Activated T-helper 1 cell treated with anti-CD3 and anti-CD28 coated beads, Interleukin-12 subunit alpha, Interleukin-12 subunit beta, Interleukin-2, Interleukin-4 antibody, amounts not matched to agents 30 ng/mL and 10 ng/mL and 1 ng/mL, durations not matched to agents 14 hours and 24 hours and 36 hours (primary cell): ENCODE measurements at regions of chr6 and their contacts with region 1.

Region 1: DNA sequence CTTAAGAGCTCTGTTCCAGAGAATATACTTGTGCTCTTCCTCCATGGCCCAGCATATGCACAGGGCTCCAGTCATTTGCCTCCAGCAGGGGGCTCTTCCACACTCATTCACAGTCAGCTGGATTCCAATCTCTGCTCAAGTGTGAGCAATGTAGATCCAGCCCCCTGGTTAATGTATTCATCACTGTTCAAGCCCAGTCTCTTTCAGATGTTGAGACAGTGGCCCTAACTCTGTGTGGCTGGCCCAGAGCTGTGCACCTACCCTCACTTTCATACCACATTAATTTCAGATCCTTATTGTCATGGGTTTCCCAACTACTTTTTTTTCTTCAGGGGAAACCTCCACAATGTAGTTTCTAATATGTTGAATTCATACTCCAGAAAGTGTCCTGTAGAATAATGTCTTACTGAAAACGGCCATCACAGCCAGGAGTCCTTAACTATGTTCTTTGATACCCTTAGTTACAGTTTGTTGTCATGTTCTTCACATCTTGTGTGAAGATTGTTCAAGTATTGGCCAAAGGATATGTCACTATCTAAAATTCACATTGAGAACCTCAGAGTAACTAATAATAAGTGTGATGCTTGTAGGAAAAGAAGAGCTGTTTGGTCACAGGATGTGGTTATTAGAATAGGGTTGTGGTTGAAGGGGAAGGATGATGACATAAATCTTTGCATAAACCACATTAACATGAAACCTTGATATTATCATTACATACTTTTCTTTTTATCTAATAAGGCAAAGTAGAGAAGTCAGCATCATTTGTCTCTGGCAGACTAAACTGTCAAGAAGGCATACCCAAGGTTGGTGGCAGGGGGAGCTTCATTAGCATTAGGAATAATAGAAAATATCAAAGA is 14.4 kb upstream of the HLA-DQA1 start:
- DNase-seq: peak; percentile 17
- H3K4me3 Mint-ChIP-seq: peak overlapping the region; percentile 68
- H3K27ac Mint-ChIP-seq: peak overlapping the region; percentile 77
- H3K4me1 Mint-ChIP-seq: peaks cover 47% of the 10 kb centered on the region
- H3K27me3 Mint-ChIP-seq: peaks cover 2% of the 10 kb centered on the region

Region 2: DNA sequence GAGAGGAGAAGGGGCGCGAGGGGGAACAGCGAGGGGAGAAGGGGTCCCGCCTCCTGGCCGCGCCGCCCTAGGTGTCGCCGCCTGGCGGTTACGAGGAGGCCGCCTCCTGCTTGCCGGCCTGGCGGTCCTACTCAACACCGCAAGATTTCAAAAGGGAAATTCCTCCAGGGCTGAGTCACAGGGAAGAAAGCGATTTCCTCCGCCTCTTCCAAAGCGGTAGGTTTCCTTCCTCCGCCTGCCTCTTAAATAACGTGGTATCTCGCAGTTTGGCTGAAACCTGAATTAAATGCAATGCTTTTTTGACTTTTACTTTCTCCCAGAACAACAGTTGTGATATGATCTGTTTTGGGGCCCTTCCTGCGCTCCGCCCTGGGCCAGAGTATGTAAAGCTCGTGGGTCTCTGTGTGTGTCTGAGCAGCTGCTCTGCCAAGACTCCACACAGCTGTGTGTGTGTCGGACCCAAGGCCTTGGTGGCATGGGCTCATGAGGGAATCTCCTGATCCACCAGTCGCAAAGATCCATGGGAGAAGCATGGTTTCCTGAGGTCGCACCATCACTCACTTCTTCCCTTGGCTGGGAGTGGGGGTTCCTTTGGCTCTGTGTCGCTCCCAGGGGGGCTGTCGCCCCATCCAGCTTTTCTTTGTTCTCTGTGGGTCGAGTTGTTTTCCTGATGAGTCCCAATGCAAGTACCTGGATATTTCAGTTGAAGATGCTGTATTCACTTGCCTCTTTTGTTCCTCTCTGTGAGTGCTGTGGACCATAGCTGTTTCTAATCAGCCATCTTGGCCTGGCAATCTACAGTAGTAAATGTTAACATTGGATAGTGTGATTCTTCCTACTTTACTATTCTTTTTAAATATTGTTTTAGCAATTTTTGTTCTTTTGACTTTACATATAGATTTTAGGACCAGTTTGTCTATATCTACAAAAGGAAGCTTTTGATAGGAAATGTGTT is 367.3 kb before region 1 on chr6:
- intact Hi-C with region 1: loop called (anchors 5 kb)
- DNase-seq: peak; percentile 47
- H3K4me3 Mint-ChIP-seq: peak overlapping the region; percentile 9
- H3K27ac Mint-ChIP-seq: peak overlapping the region; percentile 12
- H3K4me1 Mint-ChIP-seq: peaks cover 22% of the 10 kb centered on the region
- H3K27me3 Mint-ChIP-seq: peaks cover 45% of the 10 kb centered on the region

Region 3: DNA sequence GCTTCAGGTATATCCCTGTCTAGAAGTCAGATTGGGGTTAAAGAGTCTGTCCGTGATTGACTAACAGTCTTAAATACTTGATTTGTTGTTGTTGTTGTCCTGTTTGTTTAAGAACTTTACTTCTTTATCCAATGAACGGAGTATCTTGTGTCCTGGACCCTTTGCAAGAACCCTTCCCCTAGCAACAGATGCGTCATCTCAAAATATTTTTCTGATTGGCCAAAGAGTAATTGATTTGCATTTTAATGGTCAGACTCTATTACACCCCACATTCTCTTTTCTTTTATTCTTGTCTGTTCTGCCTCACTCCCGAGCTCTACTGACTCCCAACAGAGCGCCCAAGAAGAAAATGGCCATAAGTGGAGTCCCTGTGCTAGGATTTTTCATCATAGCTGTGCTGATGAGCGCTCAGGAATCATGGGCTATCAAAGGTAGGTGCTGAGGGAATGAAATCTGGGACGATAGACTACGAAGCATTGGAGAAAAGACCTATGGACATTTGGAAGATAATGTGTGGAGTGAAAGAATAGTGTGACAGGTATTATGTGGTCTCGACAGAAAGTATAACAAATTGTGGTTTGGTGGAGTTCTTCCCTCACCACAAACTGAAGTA is 183.1 kb before region 1 on chr6 and contains the start of gene HLA-DRA:
- intact Hi-C with region 1: loop called (anchors 10 kb)
- DNase-seq: peak; percentile 47
- H3K4me3 Mint-ChIP-seq: peak within 1 kb of the TSS; percentile 79
- H3K27ac Mint-ChIP-seq: peak within 1 kb of the TSS; percentile 30
- H3K4me1 Mint-ChIP-seq: peaks cover 24% of the 10 kb centered on the region
- H3K27me3 Mint-ChIP-seq: peaks cover 11% of the 10 kb centered on the region
- total RNA-seq, gene HLA-DRA: 39.3 and 40.1 TPM in 2 replicates

Region 4: DNA sequence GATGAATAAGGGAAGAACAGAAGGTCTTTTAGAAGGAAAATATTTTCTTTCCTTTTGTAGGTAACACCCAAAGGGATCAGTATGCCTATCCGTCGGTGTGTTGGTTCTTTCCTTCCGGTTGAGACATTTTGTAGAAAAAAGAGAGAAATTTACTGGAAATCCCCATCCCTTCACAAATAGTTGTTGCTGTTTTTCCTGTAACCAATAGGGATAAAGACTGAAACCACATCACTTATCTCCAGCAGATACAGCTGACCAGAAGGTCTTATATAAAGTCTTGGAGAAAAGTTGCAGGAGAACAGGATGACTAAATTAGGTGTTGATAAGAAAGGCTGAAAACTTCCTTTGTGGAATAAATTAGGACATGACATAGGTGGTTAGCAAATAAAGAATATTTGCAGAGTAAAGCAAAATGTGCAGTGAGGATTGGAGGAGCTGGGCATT is 18.3 kb before region 1 on chr6:
- intact Hi-C with region 1: loop called (anchors 1 kb)
- DNase-seq: no peak
- H3K4me3 Mint-ChIP-seq: peak overlapping the region; percentile 43
- H3K27ac Mint-ChIP-seq: peak overlapping the region; percentile 93
- H3K4me1 Mint-ChIP-seq: peaks cover 28% of the 10 kb centered on the region
- H3K27me3 Mint-ChIP-seq: no peaks in the 10 kb centered on the region

Region 5: GRCh38 chr6:32609731-32610640 is 12.8 kb before region 1 on chr6:
- intact Hi-C with region 1: loop called (anchors 1 kb)
- DNase-seq: peak; percentile 62
- H3K4me3 Mint-ChIP-seq: no peak overlapping the region
- H3K27ac Mint-ChIP-seq: no peak overlapping the region
- H3K4me1 Mint-ChIP-seq: peaks cover 15% of the 10 kb centered on the region
- H3K27me3 Mint-ChIP-seq: no peaks in the 10 kb centered on the region

Region 6: DNA sequence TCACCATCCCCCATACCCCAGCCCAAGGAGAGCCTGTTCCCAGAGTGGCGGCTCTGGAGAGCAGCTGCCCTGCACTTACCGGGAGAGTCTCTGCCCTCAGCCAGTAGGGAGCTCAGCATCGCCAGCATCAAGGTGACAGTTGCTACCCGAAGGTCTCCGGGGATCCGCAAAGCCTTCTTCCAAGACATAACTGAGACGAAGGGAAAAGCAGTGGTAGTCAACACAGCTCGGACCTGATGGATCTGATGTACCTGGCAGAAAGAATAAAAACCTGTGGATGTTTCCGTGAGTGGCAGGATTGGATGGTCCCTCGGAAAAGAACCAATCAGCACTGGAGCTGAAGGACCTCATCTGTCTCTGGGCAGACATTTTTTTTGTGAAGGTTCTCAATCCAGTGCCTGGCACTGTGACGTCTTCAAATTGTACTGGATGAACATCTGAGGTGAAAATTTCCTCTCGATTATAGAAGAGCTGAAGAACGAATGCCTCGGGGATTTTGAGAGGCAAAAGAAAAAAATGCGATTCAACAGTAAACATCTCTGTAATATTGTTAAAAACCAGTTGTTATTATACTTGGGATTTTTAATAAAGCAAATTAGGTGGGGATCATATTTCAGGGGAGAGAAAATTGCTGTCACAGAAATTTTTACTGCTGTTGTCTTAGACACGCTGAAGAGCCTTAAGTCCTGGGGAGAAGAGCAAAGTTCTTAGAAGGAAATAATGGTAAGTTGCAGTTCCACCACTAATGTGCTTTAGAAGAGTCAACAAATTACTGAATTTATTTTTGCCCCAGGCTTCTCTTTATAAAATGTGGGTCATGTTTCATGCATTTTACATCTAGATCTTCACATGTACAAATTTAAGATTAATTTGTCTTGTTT is 43.9 kb after region 1 on chr6 and contains the start of gene HLA-DQB1:
- intact Hi-C with region 1: loop called (anchors 1 kb)
- DNase-seq: peak; percentile 57
- H3K4me3 Mint-ChIP-seq: peak within 1 kb of the TSS; percentile 87
- H3K27ac Mint-ChIP-seq: peak within 1 kb of the TSS; percentile 72
- H3K4me1 Mint-ChIP-seq: peaks cover 45% of the 10 kb centered on the region
- H3K27me3 Mint-ChIP-seq: peaks cover 32% of the 10 kb centered on the region
- total RNA-seq, gene HLA-DQB1: 4.3 and 4.7 TPM in 2 replicates

Region 7: GRCh38 chr6:32685603-32686002 is 62.8 kb after region 1 on chr6:
- intact Hi-C with region 1: loop called (anchors 1 kb)
- DNase-seq: peak; percentile 47
- H3K4me3 Mint-ChIP-seq: peak overlapping the region; percentile 66
- H3K27ac Mint-ChIP-seq: peak overlapping the region; percentile 77
- H3K4me1 Mint-ChIP-seq: peaks cover 46% of the 10 kb centered on the region
- H3K27me3 Mint-ChIP-seq: peaks cover 11% of the 10 kb centered on the region

Region 8: DNA sequence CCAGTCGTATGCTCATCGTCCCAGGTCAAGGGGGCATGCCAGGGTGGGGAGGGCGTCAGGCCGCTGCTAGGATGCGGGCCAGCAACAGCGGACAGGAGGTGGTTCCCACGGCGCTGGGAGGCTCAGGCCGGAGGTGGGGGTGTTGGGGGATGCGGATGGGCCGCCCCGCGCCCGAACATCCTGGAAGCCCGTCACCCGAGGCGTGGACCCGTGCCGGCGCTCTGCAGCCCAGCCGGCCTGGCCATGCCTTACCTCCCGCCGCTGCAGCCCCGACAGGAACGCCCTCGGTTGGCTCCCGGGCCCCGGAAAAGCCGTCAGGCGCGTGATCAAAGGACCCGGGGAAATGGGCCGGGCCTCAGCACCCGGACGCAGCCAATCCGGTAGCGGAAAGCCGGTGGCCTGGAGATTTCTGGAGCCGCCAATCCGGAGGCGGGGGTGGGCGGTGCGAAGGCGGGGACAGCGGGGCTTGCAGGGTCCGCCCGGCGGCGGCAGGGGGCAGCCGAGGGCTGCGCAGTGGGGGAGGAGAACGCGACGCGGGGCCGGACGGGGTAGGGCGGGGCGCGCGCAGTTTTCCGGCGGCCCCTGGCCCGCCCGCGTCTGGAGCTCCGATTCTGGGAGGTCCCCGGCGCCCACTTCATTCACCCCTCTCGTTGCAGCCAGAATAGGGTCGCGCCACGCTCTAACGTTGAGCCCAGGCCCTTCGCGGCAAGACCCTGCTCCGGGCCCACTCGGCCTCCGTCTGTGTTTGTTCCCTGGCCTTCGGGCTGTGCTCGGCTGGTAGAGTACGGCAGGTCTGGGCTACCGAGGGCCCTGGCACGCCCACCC is 1626.2 kb after region 1 on chr6 and contains the start of gene SMIM29:
- intact Hi-C with region 1: no loop called
- DNase-seq: peak; percentile 96
- H3K4me3 Mint-ChIP-seq: peak within 1 kb of the TSS; percentile 87
- H3K27ac Mint-ChIP-seq: peak within 1 kb of the TSS; percentile 87
- H3K4me1 Mint-ChIP-seq: peaks cover 40% of the 10 kb centered on the region
- H3K27me3 Mint-ChIP-seq: peaks cover 1% of the 10 kb centered on the region
- total RNA-seq, gene SMIM29: 14.3 and 15.0 TPM in 2 replicates